Activated CD8-positive, alpha-beta memory T cell treated with anti-CD3 and anti-CD28 coated beads, Interleukin-2, amount 10 ng/mL, durations not matched to agents 7 days and 5 days (primary cell): ENCODE measurements at regions of chr5 and their contacts with region 1.

Region 1: GRCh38 chr5:148805326-148806290 is 20.8 kb upstream of the ADRB2 start:
- DNase-seq: no peak
- ATAC-seq: no peak
- H3K4me3 Mint-ChIP-seq: no peak overlapping the region
- H3K27ac Mint-ChIP-seq: no peak overlapping the region
- H3K4me1 Mint-ChIP-seq: peaks cover 58% of the 10 kb centered on the region
- H3K27me3 Mint-ChIP-seq: peaks cover 5% of the 10 kb centered on the region

Region 2: GRCh38 chr5:148746826-148747535 is 58.6 kb before region 1 on chr5:
- CTCF ChIA-PET with region 1: no interaction called
- DNase-seq: no peak
- ATAC-seq: no peak
- H3K4me3 Mint-ChIP-seq: no peak overlapping the region
- H3K27ac Mint-ChIP-seq: no peak overlapping the region
- H3K4me1 Mint-ChIP-seq: peaks cover 1% of the 10 kb centered on the region
- H3K27me3 Mint-ChIP-seq: peaks cover 18% of the 10 kb centered on the region

Region 3: GRCh38 chr5:148791334-148791667 is 14.3 kb before region 1 on chr5:
- CTCF ChIA-PET with region 1: interaction called, 10 read pairs
- DNase-seq: peak; percentile 78
- ATAC-seq: peak; percentile 92
- H3K4me3 Mint-ChIP-seq: no peak overlapping the region
- H3K27ac Mint-ChIP-seq: peak overlapping the region; percentile 26
- H3K4me1 Mint-ChIP-seq: peaks cover 39% of the 10 kb centered on the region
- H3K27me3 Mint-ChIP-seq: peaks cover 21% of the 10 kb centered on the region

Region 4: GRCh38 chr5:148820461-148821395 is 15.1 kb after region 1 on chr5:
- CTCF ChIA-PET with region 1: interaction called, 30 read pairs
- DNase-seq: no peak
- ATAC-seq: peak; percentile 54
- H3K4me3 Mint-ChIP-seq: no peak overlapping the region
- H3K27ac Mint-ChIP-seq: no peak overlapping the region
- H3K4me1 Mint-ChIP-seq: peaks cover 8% of the 10 kb centered on the region
- H3K27me3 Mint-ChIP-seq: peaks cover 28% of the 10 kb centered on the region

Region 5: DNA sequence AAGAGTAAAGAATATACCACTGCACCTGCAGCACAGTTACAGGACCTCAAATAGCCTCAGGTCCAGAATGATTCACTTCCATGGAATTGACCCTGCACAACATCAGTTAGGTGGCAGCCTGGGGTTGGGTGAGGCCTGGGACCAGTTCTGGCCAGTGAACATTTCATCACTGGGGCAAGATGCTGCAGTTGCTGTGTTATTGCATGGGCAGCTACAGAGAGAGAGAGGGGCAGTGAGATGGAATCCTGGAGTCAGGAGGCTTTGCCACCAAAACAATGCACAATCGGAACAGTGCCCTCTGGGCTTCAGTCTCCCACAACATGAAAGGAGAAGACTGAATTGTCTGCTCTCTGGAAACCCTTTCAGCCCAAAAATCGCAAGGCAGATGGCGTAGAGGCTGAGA is 205.5 kb after region 1 on chr5:
- CTCF ChIA-PET with region 1: no interaction called
- DNase-seq: no peak
- ATAC-seq: no peak
- H3K4me3 Mint-ChIP-seq: no peak overlapping the region
- H3K27ac Mint-ChIP-seq: no peak overlapping the region
- H3K4me1 Mint-ChIP-seq: peaks cover 2% of the 10 kb centered on the region
- H3K27me3 Mint-ChIP-seq: peaks cover 9% of the 10 kb centered on the region

Region 6: GRCh38 chr5:149128023-149128875 is 322.6 kb after region 1 on chr5:
- CTCF ChIA-PET with region 1: no interaction called
- DNase-seq: peak; percentile 43
- ATAC-seq: no peak
- H3K4me3 Mint-ChIP-seq: no peak overlapping the region
- H3K27ac Mint-ChIP-seq: no peak overlapping the region
- H3K4me1 Mint-ChIP-seq: no peaks in the 10 kb centered on the region
- H3K27me3 Mint-ChIP-seq: peaks cover 47% of the 10 kb centered on the region